Transverse colon (tissue), 4 donors: ENCODE measurements at regions of chr10 and their contacts with region 1.

Region 1: GRCh38 chr10:55800602-55801352 is 560.3 kb downstream of the ZWINT start:
- DNase-seq: no peak
- H3K4me3 ChIP-seq: no peak overlapping the region
- H3K27ac ChIP-seq: no peak overlapping the region
- H3K4me1 ChIP-seq: no peaks in the 10 kb centered on the region
- H3K27me3 ChIP-seq: no peaks in the 10 kb centered on the region
- CTCF ChIP-seq: no peak
- EP300 ChIP-seq: no peak
- POLR2A ChIP-seq: no peak

Region 2: DNA sequence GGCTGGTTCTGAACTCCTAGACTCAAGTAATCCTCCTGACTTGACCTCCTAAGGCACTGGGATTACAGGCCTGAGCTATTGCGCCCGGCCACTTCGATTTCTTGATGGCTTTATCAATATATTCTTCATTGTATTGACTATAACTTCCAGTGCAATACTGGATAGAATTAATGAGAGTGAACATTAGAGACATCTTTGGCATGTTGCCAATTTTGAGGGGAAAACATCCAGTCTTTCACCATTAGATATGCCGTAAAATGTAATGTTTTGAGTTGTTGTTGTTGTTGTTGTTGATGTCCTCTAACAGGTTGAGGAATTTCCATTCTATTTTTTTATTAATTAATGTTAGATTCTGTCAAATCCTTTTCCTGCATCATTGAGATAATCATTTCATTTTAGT is 18.6 kb before region 1 on chr10:
- in situ Hi-C with region 1: no loop called
- intact Hi-C with region 1: no loop called
- DNase-seq: no peak
- H3K4me3 ChIP-seq: no peak overlapping the region
- H3K27ac ChIP-seq: no peak overlapping the region
- H3K4me1 ChIP-seq: no peaks in the 10 kb centered on the region
- H3K27me3 ChIP-seq: no peaks in the 10 kb centered on the region
- CTCF ChIP-seq: no peak
- EP300 ChIP-seq: no peak
- POLR2A ChIP-seq: no peak

Region 3: GRCh38 chr10:55813451-55814170 is 12.8 kb after region 1 on chr10:
- in situ Hi-C with region 1: no loop called
- intact Hi-C with region 1: loop called (anchors 1 kb)
- DNase-seq: no peak
- H3K4me3 ChIP-seq: no peak overlapping the region
- H3K27ac ChIP-seq: no peak overlapping the region
- H3K4me1 ChIP-seq: no peaks in the 10 kb centered on the region
- H3K27me3 ChIP-seq: no peaks in the 10 kb centered on the region
- CTCF ChIP-seq: no peak
- EP300 ChIP-seq: no peak
- POLR2A ChIP-seq: no peak

Region 4: GRCh38 chr10:55837271-55837670 is 36.5 kb after region 1 on chr10:
- in situ Hi-C with region 1: no loop called
- intact Hi-C with region 1: no loop called
- DNase-seq: no peak
- H3K4me3 ChIP-seq: no peak overlapping the region
- H3K27ac ChIP-seq: no peak overlapping the region
- H3K4me1 ChIP-seq: no peaks in the 10 kb centered on the region
- H3K27me3 ChIP-seq: no peaks in the 10 kb centered on the region
- CTCF ChIP-seq: no peak
- EP300 ChIP-seq: no peak
- POLR2A ChIP-seq: no peak